SK-N-SH (cell line): ENCODE measurements at regions of chr14 and their contacts with region 1.

Region 1: DNA sequence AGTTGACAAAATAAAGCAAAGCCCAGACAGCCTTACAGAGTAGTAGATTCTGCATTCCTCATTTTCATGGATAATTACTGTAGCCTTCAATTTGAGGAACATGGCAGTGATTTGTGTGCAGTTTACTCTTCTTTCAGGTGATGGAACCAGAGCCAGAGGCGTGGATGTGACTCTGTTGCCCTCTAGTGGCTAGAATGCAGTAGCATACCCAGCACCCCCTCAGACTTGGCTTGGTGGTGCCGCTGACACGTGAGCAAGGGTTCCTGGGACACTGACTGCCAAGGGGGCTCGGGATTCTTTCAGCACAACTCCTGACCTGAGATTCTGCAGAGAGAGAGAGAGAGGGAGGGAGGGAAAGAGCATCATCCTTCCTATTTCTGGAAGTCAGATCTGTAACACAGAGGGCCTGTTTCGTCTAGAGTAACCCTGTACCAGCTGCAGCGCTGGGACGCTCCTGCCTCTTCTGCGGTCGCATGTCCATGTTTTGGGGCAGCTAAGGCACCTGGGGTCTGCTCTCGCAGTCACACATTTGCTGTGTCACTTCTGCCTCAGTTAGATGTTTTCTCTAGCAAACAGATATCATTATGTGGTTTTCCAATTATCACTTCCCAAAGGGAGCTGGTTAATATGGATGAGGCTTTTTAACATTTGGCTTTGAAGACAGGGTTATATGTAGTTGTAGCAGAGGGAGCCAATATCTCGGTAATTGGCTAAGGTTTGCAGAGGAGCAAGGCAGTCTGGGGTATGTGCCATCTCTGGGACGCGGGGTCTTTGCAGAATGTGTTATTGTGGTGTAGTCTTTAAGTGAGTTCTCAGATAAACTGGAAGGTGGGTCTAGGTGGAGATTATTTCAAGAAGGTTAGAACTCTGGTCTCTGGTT is 428.1 kb downstream of the NRXN3 start:
- DNase-seq: peak; percentile 70
- H3K4me3 ChIP-seq: peak overlapping the region in 1 of 2 experiments; percentile 39; a peak in 1 of 4 replicates
- H3K27ac ChIP-seq: no peak overlapping the region
- H3K4me1 ChIP-seq: no peaks in the 10 kb centered on the region
- H3K27me3 ChIP-seq: no peaks in the 10 kb centered on the region
- CTCF ChIP-seq: peak; percentile 82
- EP300 ChIP-seq: no peak
- RAD21 ChIP-seq: peak; percentile 86

Region 2: GRCh38 chr14:78581229-78581628 is 17.1 kb before region 1 on chr14:
- CTCF ChIA-PET with region 1: interaction called, 55 read pairs
- POLR2A ChIA-PET with region 1: no interaction called
- DNase-seq: no peak
- H3K4me3 ChIP-seq: no peak overlapping the region
- H3K27ac ChIP-seq: no peak overlapping the region
- H3K4me1 ChIP-seq: no peaks in the 10 kb centered on the region
- H3K27me3 ChIP-seq: no peaks in the 10 kb centered on the region
- CTCF ChIP-seq: no peak
- EP300 ChIP-seq: no peak
- RAD21 ChIP-seq: no peak

Region 3: DNA sequence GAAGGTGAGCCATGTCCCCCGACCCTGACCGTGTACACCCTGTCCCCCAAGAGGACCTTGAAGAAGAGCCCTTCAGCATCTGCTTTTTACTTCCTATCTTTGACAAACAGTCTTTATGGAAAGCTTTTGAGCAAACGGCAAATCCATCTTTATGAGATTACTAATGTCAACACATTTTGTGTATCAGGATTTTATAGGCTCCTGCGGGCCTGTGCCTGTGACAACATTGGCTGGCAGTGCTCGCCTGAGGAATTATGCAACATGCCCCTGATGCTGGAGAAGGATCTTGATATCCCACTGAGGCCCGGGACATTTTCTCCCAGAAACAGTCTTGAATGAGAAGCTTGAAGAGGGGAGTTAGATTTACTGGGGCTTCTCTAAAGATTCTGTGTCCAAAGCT is 11.6 kb before region 1 on chr14:
- CTCF ChIA-PET with region 1: interaction called, 55 read pairs
- POLR2A ChIA-PET with region 1: no interaction called
- DNase-seq: no peak
- H3K4me3 ChIP-seq: no peak overlapping the region
- H3K27ac ChIP-seq: no peak overlapping the region
- H3K4me1 ChIP-seq: no peaks in the 10 kb centered on the region
- H3K27me3 ChIP-seq: no peaks in the 10 kb centered on the region
- CTCF ChIP-seq: no peak
- EP300 ChIP-seq: no peak
- RAD21 ChIP-seq: no peak

Region 4: DNA sequence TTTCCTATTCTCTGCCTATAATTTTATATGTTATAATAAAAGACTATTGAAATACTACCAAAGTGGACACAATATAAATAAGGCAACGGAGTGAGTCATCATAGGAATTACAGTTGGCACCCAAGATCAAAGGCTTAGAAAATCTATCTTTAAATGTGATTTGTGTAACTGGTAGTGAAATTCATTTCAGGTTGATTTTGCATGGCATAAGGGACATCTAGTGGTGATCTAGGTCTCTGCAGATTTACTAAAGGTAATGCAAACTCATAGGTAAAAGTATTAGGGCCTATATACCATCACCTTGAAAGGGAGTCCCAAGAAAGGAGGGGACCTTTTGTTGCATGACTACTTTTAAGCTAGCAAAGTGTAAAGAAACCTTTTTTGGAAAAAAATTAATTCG is 99.1 kb after region 1 on chr14:
- CTCF ChIA-PET with region 1: interaction called, 18 read pairs
- POLR2A ChIA-PET with region 1: no interaction called
- DNase-seq: peak; percentile 17
- H3K4me3 ChIP-seq: peak overlapping the region in 1 of 2 experiments; percentile 32; a peak in 1 of 4 replicates
- H3K27ac ChIP-seq: no peak overlapping the region
- H3K4me1 ChIP-seq: peaks cover 0 to 4% of the 10 kb centered on the region in 2 experiments; a peak in 2 of 4 replicates
- H3K27me3 ChIP-seq: no peaks in the 10 kb centered on the region
- CTCF ChIP-seq: peak; percentile 52
- EP300 ChIP-seq: no peak
- RAD21 ChIP-seq: peak; percentile 75